Mucosa of descending colon (tissue), 3 donors: ENCODE measurements at regions of chr6 and their contacts with region 1.

Region 1: GRCh38 chr6:15504581-15505350 is 158.1 kb downstream of the DTNBP1 start:
- DNase-seq: peak; percentile 39 to 71 (median 48)
- ATAC-seq: peak; percentile 47
- H3K4me3 ChIP-seq: no peak overlapping the region
- H3K4me1 ChIP-seq: no peaks in the 10 kb centered on the region
- CTCF ChIP-seq: no peak

Region 2: GRCh38 chr6:15441215-15441868 is 63.4 kb before region 1 on chr6:
- intact Hi-C with region 1: no loop called
- DNase-seq: peak in 1 of 3 donors; percentile 71
- ATAC-seq: peak; percentile 66
- H3K4me3 ChIP-seq: no peak overlapping the region
- H3K4me1 ChIP-seq: peaks cover 5% of the 10 kb centered on the region
- CTCF ChIP-seq: peak; percentile 61

Region 3: DNA sequence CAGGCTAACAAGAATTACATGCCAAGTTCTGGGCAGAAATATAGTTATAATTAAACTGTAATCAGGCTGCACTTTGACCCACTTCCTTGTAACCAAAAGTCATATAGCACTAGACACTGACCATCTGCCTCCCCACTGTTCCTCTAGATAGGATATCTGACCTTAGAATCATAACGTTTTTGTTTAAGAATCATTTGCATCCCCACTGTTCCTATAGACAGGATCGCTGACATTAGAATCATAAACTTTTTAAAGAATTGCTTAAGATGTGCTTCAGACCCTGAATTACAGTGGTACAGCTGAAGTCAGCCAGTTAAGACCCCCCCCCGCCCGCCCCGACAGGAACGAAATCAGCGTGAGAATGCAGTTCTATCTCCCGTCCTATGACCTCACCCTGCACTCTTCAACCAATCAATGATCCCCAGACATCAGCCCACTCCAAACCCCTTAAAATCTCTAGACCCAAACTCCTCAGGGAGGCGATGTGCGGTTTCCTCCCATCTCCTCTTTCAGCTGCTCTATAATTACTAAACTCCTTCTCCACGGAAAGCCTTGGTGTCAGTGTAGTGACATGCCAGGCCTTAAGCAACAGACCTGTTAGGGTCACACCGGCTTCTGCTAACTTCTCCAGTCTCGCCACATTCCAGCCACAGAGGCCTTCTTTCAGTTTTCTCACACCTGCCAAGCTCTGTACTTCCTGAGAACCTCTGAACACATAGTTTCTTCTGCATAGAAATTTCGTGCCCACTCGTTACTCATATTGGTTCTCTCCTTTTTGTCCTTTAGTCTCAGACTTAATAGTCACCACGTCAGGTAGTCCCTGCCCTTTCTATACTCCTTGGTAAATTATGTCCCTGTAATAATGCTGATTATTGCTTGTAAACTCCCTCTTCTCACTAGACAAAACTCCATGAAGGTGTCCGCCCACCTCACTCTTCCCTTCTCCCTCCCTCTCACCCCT is 64.5 kb after region 1 on chr6:
- intact Hi-C with region 1: no loop called
- DNase-seq: peak in 1 of 3 donors; percentile 14
- ATAC-seq: peak; percentile 48
- H3K4me3 ChIP-seq: no peak overlapping the region
- H3K4me1 ChIP-seq: no peaks in the 10 kb centered on the region
- CTCF ChIP-seq: no peak

Region 4: DNA sequence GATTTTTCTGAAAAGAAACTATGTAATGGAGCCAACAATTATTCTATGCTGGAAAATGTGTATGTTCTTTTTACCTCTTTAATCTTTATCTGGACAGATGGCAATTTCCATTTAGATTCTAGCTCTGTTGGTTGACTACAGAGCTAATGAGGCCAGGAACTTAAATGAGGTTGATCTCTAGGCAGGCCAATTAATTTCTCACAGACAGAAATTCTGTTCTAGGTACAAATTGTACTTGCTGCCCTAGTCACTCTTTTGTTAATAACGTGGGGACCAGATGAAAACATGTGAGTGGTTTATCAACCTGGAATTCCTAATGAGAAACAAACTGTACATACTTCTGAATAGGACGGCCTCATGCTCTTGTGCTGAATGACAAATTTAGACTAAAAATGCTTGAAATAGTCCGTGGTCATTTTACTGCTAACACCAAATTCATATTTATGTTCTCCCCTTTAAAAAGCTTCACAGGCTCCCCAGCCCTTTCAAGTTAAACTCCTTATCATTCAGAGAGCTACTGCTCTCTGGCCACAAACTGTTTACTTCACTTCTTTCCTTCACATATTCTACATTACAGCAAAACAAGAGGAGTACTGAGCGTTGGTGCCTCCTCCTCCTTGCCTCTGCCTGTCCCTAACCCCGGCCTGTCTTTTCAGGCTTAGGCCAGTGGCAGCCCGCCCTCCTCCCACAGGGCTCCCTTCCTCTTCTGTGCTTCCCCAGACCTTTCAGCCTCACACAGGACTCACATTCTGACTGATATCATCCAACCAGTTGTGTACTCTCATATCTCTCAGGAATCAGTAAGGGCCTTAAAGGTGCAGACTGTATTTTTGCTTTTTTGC is 116.7 kb after region 1 on chr6:
- intact Hi-C with region 1: loop called in 1 of 2 experiments (anchors 10 kb)
- DNase-seq: peak; percentile 27 to 64 (median 35)
- ATAC-seq: peak; percentile 63
- H3K4me3 ChIP-seq: no peak overlapping the region
- H3K4me1 ChIP-seq: peaks cover 7% of the 10 kb centered on the region
- CTCF ChIP-seq: no peak